HepG2 (cell line): ENCODE measurements at regions of chr1 and their contacts with region 1.

Region 1: GRCh38 chr1:240189386-240189989 is 97.8 kb downstream of the FMN2 start:
- DNase-seq: peak; percentile 33
- ATAC-seq: peak; percentile 43; the same call in 2 of the 3 replicates
- H3K4me3 ChIP-seq: no peak overlapping the region
- H3K27ac ChIP-seq: no peak overlapping the region
- H3K4me1 ChIP-seq: no peaks in the 10 kb centered on the region
- H3K27me3 ChIP-seq: no peaks in the 10 kb centered on the region; a peak in 1 of 5 replicates
- CTCF ChIP-seq: peak; percentile 55
- EP300 ChIP-seq: no peak
- POLR2A ChIP-seq: no peak
- RAD21 ChIP-seq: no peak

Region 2: DNA sequence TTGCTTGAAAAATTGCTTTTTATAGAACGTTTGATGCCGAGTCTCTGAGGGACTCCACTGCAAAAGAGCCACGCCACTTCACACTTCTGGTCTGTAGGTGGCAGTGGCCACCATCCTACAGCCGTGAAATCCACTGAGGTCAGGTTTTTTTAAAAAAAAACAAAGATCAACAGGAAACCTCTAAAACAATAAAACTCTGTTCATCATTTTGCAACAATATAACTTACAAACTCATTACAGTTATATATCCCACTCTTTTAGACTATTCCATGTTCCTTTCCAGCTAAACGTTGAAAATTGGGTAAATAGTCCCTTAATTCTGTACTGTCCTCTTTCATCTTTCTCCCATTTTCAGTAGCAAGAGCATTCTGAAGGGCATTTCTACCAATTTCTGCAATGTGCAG is 162.4 kb before region 1 on chr1:
- CTCF ChIA-PET with region 1: interaction called, 10 read pairs
- POLR2A ChIA-PET with region 1: no interaction called
- in situ Hi-C with region 1: no loop called
- intact Hi-C with region 1: loop called (anchors 1 kb)
- DNase-seq: peak; percentile 9
- ATAC-seq: peak; percentile 91
- H3K4me3 ChIP-seq: no peak overlapping the region
- H3K27ac ChIP-seq: no peak overlapping the region
- H3K4me1 ChIP-seq: no peaks in the 10 kb centered on the region
- H3K27me3 ChIP-seq: no peaks in the 10 kb centered on the region; a peak in 1 of 5 replicates
- CTCF ChIP-seq: peak; percentile 74
- EP300 ChIP-seq: no peak
- POLR2A ChIP-seq: no peak
- RAD21 ChIP-seq: peak; percentile 49

Region 3: DNA sequence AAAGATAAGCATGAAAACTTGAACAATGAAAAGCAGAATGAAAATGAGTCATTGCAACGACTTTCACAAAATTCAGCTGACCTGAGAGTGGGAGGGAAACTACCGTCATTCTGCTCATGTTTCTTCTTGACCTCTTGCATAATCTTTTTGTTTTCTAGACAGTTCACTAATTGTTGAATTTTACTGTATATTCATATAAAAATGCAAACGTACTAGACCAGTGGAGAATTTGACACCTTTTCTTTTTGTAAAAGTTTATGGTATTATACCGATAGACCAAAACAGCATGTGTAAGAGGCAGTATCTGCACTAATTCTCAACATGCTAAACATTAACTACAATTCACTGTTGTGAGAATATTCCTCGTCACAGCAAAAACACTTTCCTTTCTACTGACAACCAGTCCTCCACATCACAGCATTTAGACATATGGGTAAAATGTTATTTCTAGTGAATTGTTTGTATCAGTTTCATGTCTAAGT is 284.7 kb after region 1 on chr1:
- CTCF ChIA-PET with region 1: no interaction called
- POLR2A ChIA-PET with region 1: no interaction called
- in situ Hi-C with region 1: no loop called
- intact Hi-C with region 1: no loop called
- DNase-seq: no peak
- ATAC-seq: no peak
- H3K4me3 ChIP-seq: no peak overlapping the region
- H3K27ac ChIP-seq: no peak overlapping the region
- H3K4me1 ChIP-seq: no peaks in the 10 kb centered on the region
- H3K27me3 ChIP-seq: no peaks in the 10 kb centered on the region
- CTCF ChIP-seq: no peak
- EP300 ChIP-seq: no peak
- POLR2A ChIP-seq: no peak
- RAD21 ChIP-seq: no peak

Region 4: DNA sequence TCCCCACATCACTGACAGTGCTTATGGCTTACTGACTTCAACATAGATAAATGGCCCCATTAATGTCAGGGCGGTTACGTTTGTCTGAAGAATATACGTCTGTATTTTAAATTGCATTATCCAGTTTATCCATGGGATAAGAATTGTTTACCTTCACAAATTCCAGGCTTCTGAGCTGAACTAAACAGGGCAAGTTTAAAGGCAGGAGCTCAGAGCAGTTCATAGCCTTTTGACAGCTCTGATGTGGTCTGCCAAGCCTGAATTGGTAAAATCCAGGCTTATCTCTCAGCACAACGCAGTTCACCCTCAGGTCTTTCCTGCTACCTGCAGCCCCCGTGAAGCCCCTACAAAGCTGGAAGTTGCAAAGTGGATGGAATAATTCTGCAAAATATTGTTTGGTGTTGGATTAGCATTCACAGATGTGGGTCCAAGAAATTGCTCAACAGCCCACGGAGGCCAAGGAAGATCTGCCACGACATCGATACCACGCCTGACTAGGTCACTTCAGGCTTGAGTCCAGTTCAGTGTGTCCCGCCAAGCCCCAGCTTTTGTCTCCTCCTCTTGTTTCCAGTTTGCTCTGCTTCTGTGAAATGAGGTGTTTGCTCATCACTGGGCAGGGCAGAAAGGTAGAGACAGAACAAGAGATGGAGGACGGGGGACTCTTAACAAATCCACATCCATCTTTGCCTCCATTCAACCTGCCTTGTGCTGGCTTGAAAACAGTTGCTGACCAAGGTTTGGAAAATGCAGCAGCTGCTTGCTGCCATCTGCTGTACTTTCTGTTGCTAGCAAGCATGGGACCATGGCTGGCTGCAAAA is 502.2 kb after region 1 on chr1:
- CTCF ChIA-PET with region 1: no interaction called
- POLR2A ChIA-PET with region 1: no interaction called
- in situ Hi-C with region 1: loop called (anchors 25 kb)
- intact Hi-C with region 1: loop called (anchors 5 kb)
- DNase-seq: peak; percentile 5
- ATAC-seq: peak; percentile 78
- H3K4me3 ChIP-seq: no peak overlapping the region
- H3K27ac ChIP-seq: no peak overlapping the region
- H3K4me1 ChIP-seq: no peaks in the 10 kb centered on the region
- H3K27me3 ChIP-seq: 0 out of 5 replicates have a peak, but pooled peaks cover 0 to 4% of the 10 kb centered on the region in 2 experiments
- CTCF ChIP-seq: peak; percentile 82
- EP300 ChIP-seq: no peak
- POLR2A ChIP-seq: no peak
- RAD21 ChIP-seq: peak; percentile 62

Region 5: GRCh38 chr1:240946926-240947325 is 757.4 kb after region 1 on chr1:
- CTCF ChIA-PET with region 1: no interaction called
- POLR2A ChIA-PET with region 1: no interaction called
- in situ Hi-C with region 1: no loop called
- intact Hi-C with region 1: loop called (anchors 10 kb)
- DNase-seq: peak; percentile 16
- ATAC-seq: peak; percentile 87
- H3K4me3 ChIP-seq: no peak overlapping the region
- H3K27ac ChIP-seq: no peak overlapping the region
- H3K4me1 ChIP-seq: no peaks in the 10 kb centered on the region
- H3K27me3 ChIP-seq: no peaks in the 10 kb centered on the region
- CTCF ChIP-seq: peak; percentile 52
- EP300 ChIP-seq: no peak
- POLR2A ChIP-seq: no peak
- RAD21 ChIP-seq: 0 out of 2 replicates have a peak, but pooled peaks have one; percentile 11